Esophagus muscularis mucosa (tissue), 4 donors: ENCODE measurements at regions of chrX and their contacts with region 1.

Region 1: DNA sequence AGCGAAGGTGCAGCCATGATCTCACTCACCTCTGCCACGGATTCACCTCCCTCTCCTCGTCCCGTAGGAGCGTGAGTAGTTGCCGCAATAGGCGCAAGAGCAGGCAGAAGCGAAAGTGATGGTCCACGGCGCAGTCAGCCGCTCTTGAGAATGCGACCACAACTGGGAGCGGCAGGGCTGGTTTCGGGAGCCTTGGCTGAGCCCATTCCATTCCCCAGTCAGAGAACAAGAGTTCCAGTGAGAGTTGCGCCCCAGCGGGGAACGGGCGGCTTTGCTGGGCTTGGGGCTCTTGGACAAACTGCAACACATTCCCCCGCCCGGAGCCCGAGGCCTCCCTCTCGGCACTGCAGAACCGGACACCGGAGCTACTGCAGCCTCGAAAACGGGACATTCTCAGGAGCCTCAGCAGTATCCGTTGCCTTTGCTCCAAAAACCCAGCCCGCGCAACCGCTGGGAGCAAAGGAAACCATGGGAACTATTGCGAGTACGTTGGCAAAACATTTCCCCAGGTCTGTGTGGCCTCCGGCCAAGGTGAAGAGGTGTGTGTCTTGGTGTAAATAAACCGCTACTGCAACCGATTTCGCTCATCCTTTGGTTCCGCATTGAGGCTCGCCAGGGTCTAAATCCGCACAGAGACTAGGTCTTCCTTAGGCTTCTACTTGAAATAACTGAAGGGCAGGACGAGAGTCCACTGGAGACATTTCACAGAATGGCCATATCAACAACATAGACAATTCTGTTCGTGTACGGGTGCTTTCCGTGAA is 5.7 kb upstream of the ZBTB33 start:
- DNase-seq: no peak
- H3K4me3 ChIP-seq: peak overlapping the region; percentile 63 to 70 (median 65)
- H3K27ac ChIP-seq: peak overlapping the region; percentile 78 to 90 (median 86)
- H3K4me1 ChIP-seq: peaks cover 0 to 16% (median 12%) of the 10 kb centered on the region in 4 donors
- H3K27me3 ChIP-seq: no peaks in the 10 kb centered on the region
- CTCF ChIP-seq: no peak
- EP300 ChIP-seq: no peak
- POLR2A ChIP-seq: no peak

Region 2: GRCh38 chrX:119943185-119943988 is 301.5 kb before region 1 on chrX and contains the start of gene NKAP:
- intact Hi-C with region 1: loop called (anchors 10 kb)
- DNase-seq: peak; percentile 94
- H3K4me3 ChIP-seq: peak within 1 kb of the TSS; percentile 56 to 78 (median 70)
- H3K27ac ChIP-seq: peak within 1 kb of the TSS; percentile 74 to 90 (median 88)
- H3K4me1 ChIP-seq: peaks cover 4 to 23% (median 20%) of the 10 kb centered on the region in 4 donors
- H3K27me3 ChIP-seq: no peaks in the 10 kb centered on the region
- CTCF ChIP-seq: peak in 1 of 3 experiments; percentile 17
- EP300 ChIP-seq: no peak
- POLR2A ChIP-seq: no peak
- total RNA-seq, gene NKAP: 5.3 to 7.1 (median 6.6) TPM

Region 3: DNA sequence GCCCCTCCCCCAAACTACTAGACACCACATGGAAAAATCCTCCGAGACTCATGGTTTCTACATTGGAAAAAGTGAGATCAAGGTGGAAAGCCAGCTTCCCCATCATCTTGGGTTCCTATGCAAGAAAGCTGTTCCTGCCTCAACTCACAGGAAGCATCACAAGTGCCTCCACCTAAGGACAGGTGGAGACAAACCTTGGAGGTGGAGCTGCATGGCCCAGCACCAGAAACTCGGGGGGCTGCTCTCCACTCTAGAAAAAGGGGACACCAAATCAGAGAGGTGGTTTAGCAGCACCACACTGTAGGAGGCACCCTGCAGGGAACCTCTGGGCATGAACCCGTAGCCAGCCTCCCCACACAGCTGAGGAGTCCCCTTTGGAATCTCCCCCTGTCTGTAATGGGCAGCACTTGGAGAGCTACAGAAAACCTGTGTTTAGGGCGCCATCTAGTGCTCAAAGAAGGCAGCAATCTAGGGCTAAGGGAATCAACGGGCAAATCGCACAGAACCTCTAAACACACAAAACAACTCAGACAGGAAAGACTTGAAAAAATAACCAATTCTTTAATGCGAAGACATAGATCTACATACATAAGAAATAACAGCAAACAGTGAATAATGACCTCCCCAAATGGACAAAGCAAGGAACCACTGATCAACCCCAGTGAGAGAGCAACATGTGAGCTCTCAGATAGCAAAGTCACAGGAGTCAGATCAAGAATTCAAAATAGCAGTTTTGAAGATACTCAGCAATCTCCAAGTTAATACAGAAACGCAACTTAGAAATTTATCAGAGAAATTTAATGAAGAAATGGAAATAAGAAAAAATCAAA is 31.3 kb before region 1 on chrX:
- intact Hi-C with region 1: no loop called
- DNase-seq: no peak
- H3K4me3 ChIP-seq: no peak overlapping the region
- H3K27ac ChIP-seq: no peak overlapping the region
- H3K4me1 ChIP-seq: no peaks in the 10 kb centered on the region
- H3K27me3 ChIP-seq: no peaks in the 10 kb centered on the region
- CTCF ChIP-seq: peak; percentile 61 to 71 (median 62)
- EP300 ChIP-seq: no peak
- POLR2A ChIP-seq: no peak

Region 4: DNA sequence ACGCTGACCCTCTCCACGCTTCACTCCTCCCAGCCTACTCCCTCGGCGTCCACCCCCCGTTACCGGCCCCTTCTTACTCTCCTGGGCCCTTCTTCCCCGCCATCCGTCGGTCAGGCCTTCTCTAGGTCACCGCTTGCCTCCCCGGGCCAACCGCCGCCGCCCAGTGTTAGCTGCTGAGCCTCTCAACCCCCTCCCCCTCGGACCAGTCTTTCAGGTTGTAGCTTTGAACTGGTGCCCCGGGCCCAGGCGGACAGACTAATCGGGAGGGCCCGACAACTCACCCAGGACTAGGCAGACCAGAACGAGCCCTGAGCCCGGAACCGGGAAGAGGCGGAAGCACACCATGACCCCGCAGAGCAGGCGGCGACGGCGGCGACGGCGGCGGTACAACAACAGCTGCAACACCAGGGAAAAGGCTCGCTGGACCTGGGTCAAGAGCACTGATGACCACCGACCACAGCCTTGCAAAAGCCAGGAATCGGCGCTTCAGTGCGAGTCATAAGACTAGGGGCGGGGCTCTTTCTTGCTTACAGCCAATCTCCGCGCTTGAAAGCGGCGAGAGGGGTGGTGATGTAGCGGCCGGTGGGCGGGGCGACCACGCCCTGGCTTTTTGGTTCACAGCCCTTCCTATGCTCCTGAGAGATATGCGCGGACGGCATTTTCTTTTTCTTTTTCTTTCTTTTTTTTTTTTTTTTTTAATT is 224.1 kb after region 1 on chrX and contains the start of gene LAMP2:
- intact Hi-C with region 1: loop called (anchors 5 kb)
- DNase-seq: peak; percentile 95
- H3K4me3 ChIP-seq: peak within 1 kb of the TSS; percentile 57 to 79 (median 62)
- H3K27ac ChIP-seq: peak within 1 kb of the TSS; percentile 81 to 91 (median 90)
- H3K4me1 ChIP-seq: peaks cover 15 to 38% (median 21%) of the 10 kb centered on the region in 4 donors
- H3K27me3 ChIP-seq: no peaks in the 10 kb centered on the region
- CTCF ChIP-seq: no peak
- EP300 ChIP-seq: no peak
- POLR2A ChIP-seq: peak; percentile 72
- total RNA-seq, gene LAMP2: 57.3 to 81.2 (median 67.5) TPM

Region 5: GRCh38 chrX:120549483-120550452 is 304.9 kb after region 1 on chrX:
- intact Hi-C with region 1: no loop called
- DNase-seq: no peak
- H3K4me3 ChIP-seq: no peak overlapping the region
- H3K27ac ChIP-seq: peak overlapping the region in 1 of 4 donors; percentile 23
- H3K4me1 ChIP-seq: peaks cover 0 to 8% (median 0%) of the 10 kb centered on the region in 4 donors
- H3K27me3 ChIP-seq: no peaks in the 10 kb centered on the region
- CTCF ChIP-seq: no peak
- EP300 ChIP-seq: no peak
- POLR2A ChIP-seq: no peak